ENCODE measurements at regions of chr12 and their contacts with region 1.

Region 1: DNA sequence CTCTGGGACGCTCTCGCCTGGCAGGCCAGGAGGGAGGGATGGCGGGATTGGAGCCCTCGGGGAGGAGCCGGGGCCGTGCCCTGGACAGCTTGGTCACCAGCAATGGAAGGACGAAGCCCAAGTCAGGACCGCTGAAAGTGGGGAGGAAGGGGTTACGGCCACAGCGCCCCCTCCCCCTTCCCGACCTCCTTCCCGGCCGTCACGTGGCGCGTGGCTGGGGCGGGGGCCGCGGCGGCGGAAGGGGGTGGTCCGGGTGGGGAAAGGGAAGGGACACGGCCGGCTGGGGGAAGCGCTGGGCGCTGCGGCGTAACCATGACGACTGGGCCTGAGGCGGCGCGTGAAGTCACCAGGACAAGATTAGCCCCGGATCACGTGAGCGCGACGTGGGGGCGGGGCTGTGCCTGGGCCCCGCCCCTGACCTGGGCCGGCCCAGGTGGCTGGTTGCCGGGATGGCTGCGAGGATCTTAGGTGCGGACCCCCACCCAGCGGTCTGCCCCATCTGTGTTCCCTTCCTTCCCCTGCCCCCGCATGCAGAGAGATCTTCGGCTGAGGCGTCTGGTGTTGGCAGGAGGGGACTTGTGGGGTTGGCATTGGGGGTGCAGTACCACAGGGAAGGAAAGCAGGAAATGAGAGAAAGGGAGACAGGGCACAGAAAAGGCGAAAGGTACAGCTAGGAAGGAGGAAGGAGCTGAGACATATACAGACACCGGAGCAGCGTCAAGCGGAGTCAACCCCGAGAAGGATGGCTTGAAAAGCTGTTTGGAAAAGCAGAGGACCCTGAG is 6.2 kb downstream of the MAP3K12 start:
- DNase-seq: peak; percentile 95
- ATAC-seq: peak; percentile 92
- H3K4me3 Mint-ChIP-seq: peak overlapping the region; percentile 87
- H3K27ac Mint-ChIP-seq: peak overlapping the region; percentile 84
- H3K4me1 Mint-ChIP-seq: peaks cover 21% of the 10 kb centered on the region
- H3K27me3 Mint-ChIP-seq: no peaks in the 10 kb centered on the region
- CTCF ChIP-seq: no peak

Region 2: DNA sequence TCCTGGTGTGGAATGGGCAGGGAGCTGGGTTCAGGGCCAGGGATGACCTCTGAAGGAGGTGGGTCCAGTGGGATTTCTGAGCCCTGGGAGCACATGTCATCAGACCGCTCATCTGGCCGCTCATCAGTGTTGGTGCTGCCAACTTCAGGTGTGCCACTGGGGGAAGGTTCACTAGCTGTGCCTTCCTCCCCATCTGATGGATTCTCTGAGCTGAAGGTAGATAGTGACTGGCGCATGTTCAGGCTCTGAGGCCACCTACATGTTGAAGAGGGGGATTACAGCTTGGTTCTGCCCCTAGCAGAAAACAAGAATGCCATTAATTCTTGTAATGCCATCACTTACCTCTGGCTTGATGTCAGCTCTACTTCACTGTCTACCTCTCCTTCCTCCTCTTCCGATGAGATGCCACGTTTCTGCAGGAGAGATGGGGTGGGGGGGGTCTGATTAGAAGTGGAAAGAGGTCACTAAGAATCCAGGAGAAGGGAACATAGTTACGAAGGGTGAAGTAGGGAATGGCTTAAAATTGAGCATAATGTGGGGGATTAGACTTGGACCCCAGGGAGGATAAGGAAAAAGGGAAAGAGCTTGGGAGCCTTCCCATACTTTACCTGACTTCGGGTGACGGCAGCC is 10.9 kb before region 1 on chr12:
- CTCF ChIA-PET with region 1: interaction called, 4 read pairs
- POLR2A ChIA-PET with region 1: interaction called, 15 read pairs
- intact Hi-C with region 1: no loop called
- DNase-seq: no peak
- ATAC-seq: peak; percentile 54
- H3K4me3 Mint-ChIP-seq: no peak overlapping the region
- H3K27ac Mint-ChIP-seq: no peak overlapping the region
- H3K4me1 Mint-ChIP-seq: peaks cover 3% of the 10 kb centered on the region
- H3K27me3 Mint-ChIP-seq: no peaks in the 10 kb centered on the region
- CTCF ChIP-seq: no peak

Measured in activated B cell treated with CpG ODN at 0.5 μM for 24 hours (primary cell).